Mammary epithelial cell (primary cell): ENCODE measurements at regions of chr3 and their contacts with region 1.

Region 1: GRCh38 chr3:15268033-15268631 is 62.1 kb downstream of the CAPN7 start:
- DNase-seq: peak; percentile 60
- H3K4me3 ChIP-seq: no peak overlapping the region
- H3K27ac ChIP-seq: no peak overlapping the region
- H3K4me1 ChIP-seq: peaks cover 20% of the 10 kb centered on the region
- H3K27me3 ChIP-seq: no peaks in the 10 kb centered on the region
- CTCF ChIP-seq: peak; percentile 94 to 97

Region 2: GRCh38 chr3:15186101-15186476 is 82.0 kb before region 1 on chr3:
- CTCF ChIA-PET with region 1: no interaction called
- dilution Hi-C with region 1: no loop called
- in situ Hi-C with region 1: no loop called
- intact Hi-C with region 1: no loop called
- DNase-seq: no peak
- H3K4me3 ChIP-seq: no peak overlapping the region
- H3K27ac ChIP-seq: no peak overlapping the region
- H3K4me1 ChIP-seq: no peaks in the 10 kb centered on the region
- H3K27me3 ChIP-seq: peaks cover 5% of the 10 kb centered on the region
- CTCF ChIP-seq: no peak

Region 3: GRCh38 chr3:15332405-15333098 is 64.4 kb after region 1 on chr3 and contains the start of gene SH3BP5:
- CTCF ChIA-PET with region 1: no interaction called
- dilution Hi-C with region 1: no loop called
- in situ Hi-C with region 1: loop called in 1 of 2 experiments (anchors 5 kb)
- intact Hi-C with region 1: loop called (anchors 1 kb)
- DNase-seq: peak; percentile 68
- H3K4me3 ChIP-seq: peak within 1 kb of the TSS; percentile 84 to 91 (median 89)
- H3K27ac ChIP-seq: peak within 1 kb of the TSS; percentile 34
- H3K4me1 ChIP-seq: peaks cover 19% of the 10 kb centered on the region
- H3K27me3 ChIP-seq: no peaks in the 10 kb centered on the region
- CTCF ChIP-seq: peak; percentile 22 to 64
- total RNA-seq, gene SH3BP5: 15.4 to 21.0 TPM

Region 4: GRCh38 chr3:15372918-15373317 is 104.8 kb after region 1 on chr3:
- CTCF ChIA-PET with region 1: no interaction called
- dilution Hi-C with region 1: loop called (anchors 5 kb)
- in situ Hi-C with region 1: no loop called
- intact Hi-C with region 1: loop called (anchors 1 kb)
- DNase-seq: no peak
- H3K4me3 ChIP-seq: no peak overlapping the region
- H3K27ac ChIP-seq: no peak overlapping the region
- H3K4me1 ChIP-seq: no peaks in the 10 kb centered on the region
- H3K27me3 ChIP-seq: no peaks in the 10 kb centered on the region
- CTCF ChIP-seq: no peak

Region 5: GRCh38 chr3:15384510-15385237 is 116.5 kb after region 1 on chr3:
- CTCF ChIA-PET with region 1: no interaction called
- dilution Hi-C with region 1: no loop called
- in situ Hi-C with region 1: loop called (anchors 5 kb)
- intact Hi-C with region 1: no loop called
- DNase-seq: no peak
- H3K4me3 ChIP-seq: no peak overlapping the region
- H3K27ac ChIP-seq: no peak overlapping the region
- H3K4me1 ChIP-seq: peaks cover 10% of the 10 kb centered on the region
- H3K27me3 ChIP-seq: no peaks in the 10 kb centered on the region
- CTCF ChIP-seq: no peak

Region 6: GRCh38 chr3:15527031-15527459 is 258.9 kb after region 1 on chr3:
- CTCF ChIA-PET with region 1: no interaction called
- dilution Hi-C with region 1: loop called (anchors 25 kb)
- in situ Hi-C with region 1: no loop called
- intact Hi-C with region 1: no loop called
- DNase-seq: no peak
- H3K4me3 ChIP-seq: no peak overlapping the region
- H3K27ac ChIP-seq: no peak overlapping the region
- H3K4me1 ChIP-seq: no peaks in the 10 kb centered on the region
- H3K27me3 ChIP-seq: no peaks in the 10 kb centered on the region
- CTCF ChIP-seq: no peak